H1 (cell line): ENCODE measurements at regions of chrX and their contacts with region 1.

Region 1: GRCh38 chrX:48025561-48025960 is 18.8 kb downstream of the SPACA5 start:
- DNase-seq: peak in 1 of 2 experiments; percentile 50
- H3K4me3 ChIP-seq: no peak overlapping the region
- H3K27ac ChIP-seq: no peak overlapping the region
- H3K4me1 ChIP-seq: no peaks in the 10 kb centered on the region
- H3K27me3 ChIP-seq: no peaks in the 10 kb centered on the region
- CTCF ChIP-seq: peak in 2 of 3 experiments; percentile 59 to 63; a peak in 3 of 4 replicates
- EP300 ChIP-seq: no peak
- POLR2A ChIP-seq: no peak
- RAD21 ChIP-seq: peak; percentile 70 to 78

Region 2: GRCh38 chrX:47854474-47854873 is 171.1 kb before region 1 on chrX:
- CTCF ChIA-PET with region 1: interaction called, 31 read pairs
- POLR2A ChIA-PET with region 1: no interaction called
- DNase-seq: peak in 1 of 2 experiments; percentile 43
- H3K4me3 ChIP-seq: no peak overlapping the region
- H3K27ac ChIP-seq: no peak overlapping the region
- H3K4me1 ChIP-seq: no peaks in the 10 kb centered on the region
- H3K27me3 ChIP-seq: no peaks in the 10 kb centered on the region
- CTCF ChIP-seq: peak; percentile 46 to 59 (median 48)
- EP300 ChIP-seq: no peak
- POLR2A ChIP-seq: no peak
- RAD21 ChIP-seq: peak; percentile 70 to 71

Region 3: DNA sequence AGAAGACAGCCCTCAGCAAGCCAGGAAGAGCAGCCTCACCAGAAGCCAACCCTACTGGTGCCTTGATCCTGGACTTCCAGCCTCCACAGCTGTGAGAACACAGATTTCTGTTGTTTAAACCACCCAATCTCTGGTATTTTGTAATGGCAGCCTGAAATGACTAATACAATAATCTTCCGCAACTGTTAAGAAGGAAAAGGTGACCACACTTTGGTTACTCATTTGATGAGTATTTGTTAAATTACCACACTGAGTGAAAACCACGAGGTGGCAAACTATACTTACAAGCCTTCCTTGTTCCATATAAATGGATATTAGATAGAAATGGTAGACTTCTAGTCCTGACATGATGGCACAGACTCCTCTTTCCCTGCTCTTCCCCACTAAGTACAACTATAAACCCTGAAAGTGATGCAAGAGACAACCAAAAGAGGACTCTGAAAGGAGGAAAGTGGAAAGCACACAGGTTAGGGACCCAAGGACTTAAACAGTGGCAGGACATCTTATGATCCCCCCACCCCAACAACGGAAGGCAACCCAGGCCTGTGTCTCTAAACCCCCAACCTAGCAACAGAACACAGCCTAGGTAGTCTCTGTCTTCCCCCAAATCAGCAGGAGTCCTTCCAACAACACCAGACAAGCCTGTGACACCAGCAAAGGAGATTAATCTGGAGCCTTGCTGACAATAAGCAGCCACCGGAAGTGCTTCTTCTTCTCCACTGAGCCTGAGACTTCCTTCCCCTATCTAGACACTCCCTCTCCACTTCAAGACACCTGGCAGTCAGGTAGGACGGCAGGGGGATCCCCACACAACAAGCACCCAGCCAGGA is 34.1 kb before region 1 on chrX:
- CTCF ChIA-PET with region 1: no interaction called
- POLR2A ChIA-PET with region 1: no interaction called
- DNase-seq: no peak
- H3K4me3 ChIP-seq: no peak overlapping the region
- H3K27ac ChIP-seq: no peak overlapping the region
- H3K4me1 ChIP-seq: no peaks in the 10 kb centered on the region
- H3K27me3 ChIP-seq: no peaks in the 10 kb centered on the region
- CTCF ChIP-seq: no peak
- EP300 ChIP-seq: no peak
- POLR2A ChIP-seq: no peak
- RAD21 ChIP-seq: no peak

Region 4: DNA sequence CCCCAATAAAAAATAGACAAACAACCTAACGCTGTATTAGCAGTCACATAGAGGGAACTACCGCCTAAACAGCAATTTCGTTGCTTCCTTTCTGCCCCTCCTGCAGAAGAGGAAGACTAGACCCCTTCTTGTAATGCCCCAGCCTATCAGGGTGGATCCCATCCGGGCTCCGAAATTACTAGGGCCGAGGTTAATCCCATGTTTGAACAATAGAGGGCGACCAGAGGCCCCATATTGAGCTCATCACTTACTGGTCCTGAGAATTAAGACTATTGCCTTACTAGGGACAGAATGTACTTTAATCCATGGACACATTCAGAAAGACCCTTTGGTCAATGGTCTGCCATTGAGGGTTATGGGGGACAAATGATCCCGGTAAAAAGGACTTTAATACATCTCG is 57.7 kb after region 1 on chrX:
- CTCF ChIA-PET with region 1: no interaction called
- POLR2A ChIA-PET with region 1: no interaction called
- DNase-seq: peak; percentile 9 to 49
- H3K4me3 ChIP-seq: no peak overlapping the region
- H3K27ac ChIP-seq: no peak overlapping the region
- H3K4me1 ChIP-seq: no peaks in the 10 kb centered on the region
- H3K27me3 ChIP-seq: no peaks in the 10 kb centered on the region
- CTCF ChIP-seq: peak; percentile 6 to 54 (median 49)
- EP300 ChIP-seq: no peak
- POLR2A ChIP-seq: no peak
- RAD21 ChIP-seq: peak; percentile 68 to 76